KBM-7 (cell line): ENCODE measurements at regions of chr13 and their contacts with region 1.

Region 1: GRCh38 chr13:51125498-51126226 is 14.6 kb upstream of the C13orf42 start:
- DNase-seq: peak; percentile 68

Region 2: GRCh38 chr13:51814825-51815650 is 689.4 kb after region 1 on chr13:
- in situ Hi-C with region 1: loop called (anchors 25 kb)
- DNase-seq: peak; percentile 87